ENCODE measurements at regions of chr22 and their contacts with region 1.

Region 1: DNA sequence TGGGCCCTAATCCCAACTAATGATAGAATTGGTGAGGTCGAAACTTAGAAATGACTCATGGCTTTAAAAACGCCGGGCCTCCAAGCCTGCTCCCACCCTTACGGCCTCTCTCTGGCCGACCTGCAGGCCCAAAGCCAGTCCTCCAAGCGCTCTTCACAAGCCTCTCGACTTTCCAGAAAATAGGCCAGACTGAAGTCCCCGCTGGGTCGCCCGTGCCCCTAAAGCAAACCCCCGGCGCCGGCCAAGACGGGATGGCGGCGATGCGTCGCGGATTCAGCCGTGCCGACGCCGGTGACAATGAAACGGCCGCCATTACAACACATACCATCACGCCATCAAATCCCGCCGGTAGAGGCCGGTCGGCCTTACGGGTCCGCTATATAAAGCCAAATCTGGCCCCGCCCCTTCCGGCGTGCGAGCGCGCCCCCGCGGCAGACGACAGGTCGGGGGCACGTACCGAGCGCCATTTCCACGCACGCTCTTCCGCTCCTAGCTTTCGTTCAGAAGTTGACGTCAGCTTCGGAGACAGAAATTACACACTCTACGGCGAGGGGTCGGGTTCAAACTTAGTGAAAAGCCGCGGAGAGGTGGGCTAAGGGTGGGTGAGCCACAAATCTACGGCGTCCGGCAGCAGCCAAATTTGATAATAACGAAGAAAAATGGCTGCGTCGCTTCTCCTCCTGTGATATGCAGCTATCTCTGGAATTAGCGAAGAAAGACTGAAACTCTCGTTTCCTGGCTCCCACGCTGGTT is at the start of gene RPL3:
- DNase-seq: peak; percentile 86
- H3K4me3 ChIP-seq: peak within 1 kb of the TSS; percentile 66 to 79
- H3K27ac ChIP-seq: peak within 1 kb of the TSS; percentile 95
- H3K4me1 ChIP-seq: peaks cover 12 to 26% of the 10 kb centered on the region in 2 experiments; a peak in 2 of 4 replicates
- H3K27me3 ChIP-seq: no peaks in the 10 kb centered on the region
- CTCF ChIP-seq: no peak
- EP300 ChIP-seq: 0 out of 4 replicates have a peak, but pooled peaks of 1 of the 2 experiments have one; percentile 15
- RAD21 ChIP-seq: no peak
- polyA plus RNA-seq, gene RPL3: 4,089 and 4,976 TPM in 2 replicates

Region 2: DNA sequence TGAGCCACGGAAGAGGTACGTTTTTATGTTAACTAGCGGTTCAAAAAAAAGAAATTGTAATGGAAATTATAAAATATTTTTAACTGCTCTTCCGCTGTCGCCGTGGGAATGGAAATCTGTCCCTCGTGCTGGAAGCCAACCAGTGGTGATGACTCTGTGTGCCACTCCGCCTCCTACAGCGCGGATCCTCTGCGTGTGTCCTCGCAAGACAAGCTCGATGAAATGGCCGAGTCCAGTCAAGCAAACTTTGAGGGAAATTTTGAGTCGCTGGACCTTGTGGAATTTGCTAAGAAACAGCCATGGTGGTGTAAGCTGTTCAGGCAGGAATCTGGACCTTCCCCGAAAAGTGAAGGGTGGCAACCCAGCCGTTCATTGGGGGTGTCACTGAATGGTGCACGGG is 164.0 kb before region 1 on chr22:
- CTCF ChIA-PET with region 1: interaction called, 10 read pairs
- POLR2A ChIA-PET with region 1: interaction called, 5 read pairs
- DNase-seq: no peak
- H3K4me3 ChIP-seq: no peak overlapping the region
- H3K27ac ChIP-seq: no peak overlapping the region
- H3K4me1 ChIP-seq: peaks cover 0 to 2% of the 10 kb centered on the region in 2 experiments; a peak in 1 of 4 replicates
- H3K27me3 ChIP-seq: peaks cover 14% of the 10 kb centered on the region; the same call in 1 of the 2 replicates
- CTCF ChIP-seq: no peak
- EP300 ChIP-seq: no peak
- RAD21 ChIP-seq: no peak

Region 3: DNA sequence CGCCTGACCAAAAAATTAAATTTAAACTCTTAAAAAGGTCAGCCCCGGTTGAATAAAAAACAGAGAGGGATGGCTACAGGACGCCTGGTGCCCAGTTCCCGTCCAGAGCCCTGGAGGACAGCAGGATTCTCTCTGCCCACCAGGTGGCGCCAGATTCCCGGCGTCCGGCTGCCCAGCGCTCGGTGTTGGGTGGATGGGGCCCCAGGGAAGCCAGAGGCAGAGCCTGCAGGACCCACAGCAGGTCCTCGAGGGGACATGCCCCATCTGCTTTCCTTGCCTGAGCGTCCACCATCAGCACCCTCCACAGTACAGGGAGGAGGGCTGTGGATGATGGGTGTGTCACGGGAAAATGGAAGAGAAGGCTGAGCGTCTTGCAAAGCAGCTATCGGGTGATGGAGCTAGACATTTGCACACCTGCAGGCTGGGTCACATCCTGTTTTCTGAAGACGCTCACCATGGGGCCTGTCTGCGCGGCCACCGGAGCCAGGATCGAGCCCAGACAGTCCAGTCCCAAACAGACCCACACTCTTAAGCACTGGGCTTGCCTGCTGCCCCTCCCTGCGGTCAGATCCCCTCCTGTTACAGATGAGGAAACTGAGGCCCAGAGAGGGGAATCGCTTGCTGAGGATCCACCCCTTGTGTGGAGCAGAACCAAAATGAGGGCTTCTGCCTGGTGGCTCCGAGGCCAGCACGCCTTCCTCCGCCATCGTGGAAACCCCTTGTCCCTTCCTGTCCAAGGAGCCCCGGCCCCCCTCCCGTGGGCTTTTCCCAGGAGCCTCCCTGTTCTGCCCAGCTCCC is 148.4 kb before region 1 on chr22:
- CTCF ChIA-PET with region 1: interaction called, 14 read pairs
- POLR2A ChIA-PET with region 1: interaction called, 3 read pairs
- DNase-seq: peak; percentile 79
- H3K4me3 ChIP-seq: peak overlapping the region in 1 of 2 experiments; percentile 57; a peak in 1 of 4 replicates
- H3K27ac ChIP-seq: no peak overlapping the region; a peak in 1 of 4 replicates
- H3K4me1 ChIP-seq: peaks cover 4 to 9% of the 10 kb centered on the region in 2 experiments; a peak in 2 of 4 replicates
- H3K27me3 ChIP-seq: no peaks in the 10 kb centered on the region
- CTCF ChIP-seq: peak; percentile 71
- EP300 ChIP-seq: no peak
- RAD21 ChIP-seq: peak; percentile 81

Region 4: DNA sequence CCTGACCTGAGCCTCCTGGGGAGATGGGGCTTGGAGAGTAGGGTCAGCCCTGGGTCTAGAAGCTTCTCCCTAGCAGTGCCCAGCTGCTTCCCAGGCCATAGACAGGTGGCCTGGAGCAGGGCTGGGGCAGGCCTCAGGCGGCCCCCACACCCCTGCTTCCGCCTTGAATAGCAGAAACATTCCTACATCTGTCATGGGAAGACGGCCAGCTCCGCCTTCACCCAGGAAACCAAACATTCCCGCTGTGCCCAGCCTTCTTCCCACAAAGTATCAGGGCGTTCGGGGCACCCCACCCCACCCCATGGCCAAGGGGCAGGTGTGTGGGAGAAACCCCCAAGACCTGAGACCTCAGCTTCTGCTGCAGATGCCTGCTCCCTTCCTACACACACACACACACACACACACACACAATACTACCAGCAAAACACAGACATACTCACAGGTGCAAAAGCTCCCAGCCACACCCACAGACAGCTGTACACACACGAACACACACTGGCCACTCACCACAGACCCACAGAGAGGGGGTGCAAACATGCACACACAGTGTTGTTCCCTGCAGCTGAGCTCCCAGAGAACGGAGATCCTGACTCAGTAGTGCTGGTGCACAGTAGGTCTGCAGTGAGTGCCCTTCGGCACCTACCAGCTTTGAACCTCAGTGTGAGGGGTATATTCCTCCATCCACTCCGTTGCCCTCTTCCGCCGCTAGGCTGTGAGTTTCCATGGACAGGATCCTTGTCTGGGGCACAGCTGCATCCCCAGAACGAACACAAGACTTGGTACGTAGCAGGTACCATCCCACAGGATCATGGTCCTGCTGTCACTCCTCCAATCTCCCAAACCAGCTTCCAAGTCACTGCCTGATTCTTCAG is 112.1 kb before region 1 on chr22:
- CTCF ChIA-PET with region 1: no interaction called
- POLR2A ChIA-PET with region 1: no interaction called
- DNase-seq: no peak
- H3K4me3 ChIP-seq: no peak overlapping the region
- H3K27ac ChIP-seq: no peak overlapping the region
- H3K4me1 ChIP-seq: no peaks in the 10 kb centered on the region
- H3K27me3 ChIP-seq: no peaks in the 10 kb centered on the region
- CTCF ChIP-seq: no peak
- EP300 ChIP-seq: no peak
- RAD21 ChIP-seq: no peak

Region 5: GRCh38 chr22:39300186-39300830 is 19.1 kb before region 1 on chr22:
- CTCF ChIA-PET with region 1: interaction called, 15 read pairs
- POLR2A ChIA-PET with region 1: interaction called, 4 read pairs
- DNase-seq: no peak
- H3K4me3 ChIP-seq: no peak overlapping the region
- H3K27ac ChIP-seq: no peak overlapping the region
- H3K4me1 ChIP-seq: peaks cover 0 to 3% of the 10 kb centered on the region in 2 experiments; a peak in 1 of 4 replicates
- H3K27me3 ChIP-seq: no peaks in the 10 kb centered on the region
- CTCF ChIP-seq: no peak
- EP300 ChIP-seq: no peak
- RAD21 ChIP-seq: no peak

Region 6: DNA sequence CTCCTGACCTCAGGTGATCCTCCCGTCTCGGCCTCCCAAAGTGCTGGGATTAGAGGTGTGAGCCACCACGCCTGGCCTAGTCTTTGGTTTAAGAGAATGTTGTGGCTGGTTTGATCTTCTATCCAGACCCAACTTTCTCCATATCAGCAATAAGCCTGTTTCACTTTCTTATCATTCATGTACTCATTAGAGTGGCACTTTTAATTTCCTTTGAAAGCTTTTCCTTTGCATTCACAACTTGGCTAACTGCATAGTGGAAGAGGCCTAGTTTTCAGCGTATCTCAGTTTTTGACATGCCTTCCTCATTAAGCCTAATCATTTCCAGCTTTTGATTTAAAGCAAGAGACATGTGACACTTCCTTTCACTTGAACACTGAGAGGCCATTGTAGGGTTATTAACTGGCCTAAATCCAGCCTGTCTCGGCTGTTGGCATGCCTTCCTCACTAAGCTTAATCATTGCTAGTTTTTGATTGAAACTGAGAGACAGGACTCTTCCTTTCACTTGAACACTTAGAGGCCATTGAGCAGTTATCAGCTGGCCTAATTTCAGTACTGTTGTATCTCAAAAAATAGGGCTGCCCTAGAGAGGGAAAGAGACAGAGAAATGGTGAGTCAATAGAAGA is 13.1 kb after region 1 on chr22:
- CTCF ChIA-PET with region 1: interaction called, 6 read pairs
- POLR2A ChIA-PET with region 1: interaction called, 19 read pairs
- DNase-seq: no peak
- H3K4me3 ChIP-seq: no peak overlapping the region
- H3K27ac ChIP-seq: peak overlapping the region; percentile 50 to 60
- H3K4me1 ChIP-seq: peaks cover 0 to 6% of the 10 kb centered on the region in 2 experiments; a peak in 1 of 4 replicates
- H3K27me3 ChIP-seq: no peaks in the 10 kb centered on the region
- CTCF ChIP-seq: no peak
- EP300 ChIP-seq: no peak; a peak in 1 of 4 replicates
- RAD21 ChIP-seq: no peak

Region 7: DNA sequence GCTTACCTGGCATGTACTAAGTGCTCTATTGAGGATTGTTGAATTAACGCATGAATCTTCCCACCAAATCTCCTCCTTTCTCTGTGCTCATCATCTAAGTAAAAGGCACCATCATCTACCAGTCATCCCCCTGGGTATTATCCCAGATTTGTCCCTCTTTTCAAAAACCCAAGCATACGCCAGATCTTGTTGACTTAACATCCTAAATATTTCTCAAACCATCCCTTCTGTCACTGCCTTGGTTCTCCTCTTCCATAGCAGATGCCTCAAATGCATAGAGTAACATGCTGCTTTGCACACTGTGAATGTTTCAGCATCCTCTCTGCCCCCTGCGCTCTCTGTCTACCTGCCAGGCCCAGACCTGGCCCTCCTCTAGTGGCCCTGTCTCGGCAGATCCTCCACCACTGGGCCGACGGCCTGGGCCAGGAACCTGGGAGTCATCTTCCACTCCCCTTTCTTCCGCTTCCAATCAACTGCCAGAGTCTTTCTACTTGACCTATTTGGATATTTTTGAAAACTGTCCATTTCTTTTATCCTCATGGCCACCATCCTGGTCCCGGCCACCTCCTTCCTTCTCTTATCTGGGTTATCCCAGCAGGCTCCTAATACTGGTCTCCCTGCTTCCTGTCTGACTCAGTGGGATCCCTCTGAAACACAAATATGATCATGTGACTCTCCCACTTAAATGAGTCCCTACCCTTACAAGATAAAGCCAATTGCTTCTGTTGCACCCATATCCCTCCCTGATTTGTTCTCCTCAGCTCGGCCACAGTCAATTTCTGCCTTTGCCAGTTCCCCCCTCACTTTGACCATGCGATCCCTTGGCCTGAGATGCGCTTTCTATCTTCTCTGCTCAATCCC is 76.7 kb after region 1 on chr22:
- CTCF ChIA-PET with region 1: interaction called, 3 read pairs
- POLR2A ChIA-PET with region 1: interaction called, 12 read pairs
- DNase-seq: no peak
- H3K4me3 ChIP-seq: no peak overlapping the region
- H3K27ac ChIP-seq: no peak overlapping the region
- H3K4me1 ChIP-seq: peaks cover 0 to 3% of the 10 kb centered on the region in 2 experiments; a peak in 1 of 4 replicates
- H3K27me3 ChIP-seq: no peaks in the 10 kb centered on the region
- CTCF ChIP-seq: no peak
- EP300 ChIP-seq: no peak
- RAD21 ChIP-seq: no peak

Region 8: GRCh38 chr22:39839917-39840510 is 520.6 kb after region 1 on chr22:
- CTCF ChIA-PET with region 1: no interaction called
- POLR2A ChIA-PET with region 1: no interaction called
- DNase-seq: no peak
- H3K4me3 ChIP-seq: no peak overlapping the region
- H3K27ac ChIP-seq: no peak overlapping the region
- H3K4me1 ChIP-seq: no peaks in the 10 kb centered on the region
- H3K27me3 ChIP-seq: no peaks in the 10 kb centered on the region
- CTCF ChIP-seq: no peak
- EP300 ChIP-seq: no peak
- RAD21 ChIP-seq: no peak